Ascending aorta (tissue), 2 donors: ENCODE measurements at regions of chr2 and their contacts with region 1.

Region 1: GRCh38 chr2:55923091-55923981 is at the start of gene EFEMP1:
- DNase-seq: peak in 1 of 2 donors; percentile 87
- H3K4me3 ChIP-seq: peak within 1 kb of the TSS; percentile 66 to 83
- H3K27ac ChIP-seq: peak within 1 kb of the TSS; percentile 74 to 80
- H3K4me1 ChIP-seq: peaks cover 0 to 6% of the 10 kb centered on the region in 2 donors
- H3K27me3 ChIP-seq: no peaks in the 10 kb centered on the region
- CTCF ChIP-seq: no peak
- total RNA-seq, gene EFEMP1: 1,320 TPM

Region 2: GRCh38 chr2:53964257-53964952 is 1958.9 kb before region 1 on chr2:
- intact Hi-C with region 1: no loop called
- DNase-seq: no peak
- H3K4me3 ChIP-seq: no peak overlapping the region
- H3K27ac ChIP-seq: no peak overlapping the region
- H3K4me1 ChIP-seq: peaks cover 3 to 10% of the 10 kb centered on the region in 2 donors
- H3K27me3 ChIP-seq: no peaks in the 10 kb centered on the region
- CTCF ChIP-seq: no peak

Region 3: GRCh38 chr2:55771612-55772011 is 151.7 kb before region 1 on chr2:
- intact Hi-C with region 1: loop called (anchors 10 kb)
- DNase-seq: no peak
- H3K4me3 ChIP-seq: no peak overlapping the region
- H3K27ac ChIP-seq: no peak overlapping the region
- H3K4me1 ChIP-seq: peaks cover 0 to 3% of the 10 kb centered on the region in 2 donors
- H3K27me3 ChIP-seq: no peaks in the 10 kb centered on the region
- CTCF ChIP-seq: peak; percentile 45 to 87 (median 77)

Region 4: DNA sequence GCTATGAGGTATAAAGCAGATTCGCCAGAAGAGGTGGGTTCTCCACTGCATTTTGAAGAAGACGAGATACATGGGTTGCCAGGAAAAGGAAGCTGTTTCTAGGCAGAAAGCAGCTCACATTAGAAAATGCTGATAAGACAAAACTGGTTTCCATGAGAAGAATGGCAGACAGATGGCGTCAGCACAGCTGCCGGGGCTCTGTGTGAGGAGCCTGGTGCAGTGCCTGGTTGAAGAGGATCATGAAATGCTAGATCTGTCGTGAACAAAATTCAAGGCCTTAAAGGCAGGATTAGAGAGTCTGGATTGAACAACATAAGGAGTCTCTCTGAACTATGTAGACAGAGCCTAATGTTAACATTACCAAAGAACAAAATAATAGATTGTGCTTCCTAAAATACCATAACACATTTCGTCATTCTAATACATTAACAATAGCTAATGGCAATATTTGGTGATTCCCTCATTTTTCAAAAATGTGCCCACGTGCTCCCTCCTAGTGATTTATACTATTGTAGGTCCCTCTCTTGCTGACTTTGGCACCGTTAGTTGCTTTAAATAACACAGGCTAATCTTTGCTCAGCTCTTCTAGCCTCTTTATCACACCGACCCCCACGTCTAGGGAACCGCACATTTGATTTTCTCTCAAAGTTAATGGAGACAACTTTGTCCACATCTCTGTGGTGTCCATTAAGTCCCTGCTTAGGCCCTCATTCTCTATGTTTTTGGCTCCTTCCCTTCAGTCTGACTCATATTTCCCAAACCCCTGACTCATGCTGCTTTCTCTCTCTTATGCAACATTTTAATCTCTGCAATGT is 38.0 kb before region 1 on chr2:
- intact Hi-C with region 1: loop called (anchors 5 kb)
- DNase-seq: peak in 1 of 2 donors; percentile 73
- H3K4me3 ChIP-seq: no peak overlapping the region
- H3K27ac ChIP-seq: peak overlapping the region; percentile 89 to 93
- H3K4me1 ChIP-seq: peaks cover 15 to 65% of the 10 kb centered on the region in 2 donors
- H3K27me3 ChIP-seq: no peaks in the 10 kb centered on the region
- CTCF ChIP-seq: no peak

Region 5: GRCh38 chr2:55961318-55961911 is 38.1 kb after region 1 on chr2:
- intact Hi-C with region 1: loop called (anchors 2 kb)
- DNase-seq: no peak
- H3K4me3 ChIP-seq: no peak overlapping the region
- H3K27ac ChIP-seq: no peak overlapping the region
- H3K4me1 ChIP-seq: peaks cover 7 to 8% of the 10 kb centered on the region in 2 donors
- H3K27me3 ChIP-seq: no peaks in the 10 kb centered on the region
- CTCF ChIP-seq: peak; percentile 37 to 72 (median 61)